HCT116 (cell line): ENCODE measurements at regions of chr10 and their contacts with region 1.

Region 1: GRCh38 chr10:115417585-115418265 is 324.6 kb downstream of the ATRNL1 start:
- DNase-seq: peak; percentile 66
- ATAC-seq: peak; percentile 100
- H3K4me3 ChIP-seq: no peak overlapping the region
- H3K27ac ChIP-seq: no peak overlapping the region
- H3K4me1 ChIP-seq: no peaks in the 10 kb centered on the region
- H3K27me3 ChIP-seq: peaks cover 16% of the 10 kb centered on the region; the same call in 1 of the 2 replicates
- CTCF ChIP-seq: peak; percentile 85 to 95 (median 93)
- POLR2A ChIP-seq: no peak
- RAD21 ChIP-seq: peak; percentile 92

Region 2: DNA sequence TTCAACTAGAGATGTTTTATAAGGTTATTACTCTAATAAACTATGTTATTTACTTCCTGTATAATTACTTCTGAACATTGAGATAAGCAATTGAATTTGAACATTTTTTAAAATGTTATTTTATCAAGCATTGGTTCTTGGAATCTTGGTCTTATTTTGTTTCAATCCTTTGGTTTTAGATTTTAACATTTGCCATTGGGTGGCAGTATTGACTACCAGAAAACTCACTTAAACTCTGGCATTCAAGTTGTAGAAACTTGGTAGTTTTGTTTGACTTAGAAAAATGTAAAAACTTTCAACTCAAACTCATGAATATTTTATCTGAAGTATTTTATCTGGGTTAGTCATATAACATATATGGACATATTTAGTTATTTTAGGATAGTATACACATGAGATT is 276.5 kb before region 1 on chr10:
- CTCF ChIA-PET with region 1: interaction called, 45 read pairs
- POLR2A ChIA-PET with region 1: no interaction called
- RAD21 ChIA-PET with region 1: no interaction called
- intact Hi-C with region 1: loop called (anchors 1 kb)
- DNase-seq: peak; percentile 15
- ATAC-seq: no peak
- H3K4me3 ChIP-seq: no peak overlapping the region
- H3K27ac ChIP-seq: no peak overlapping the region
- H3K4me1 ChIP-seq: no peaks in the 10 kb centered on the region
- H3K27me3 ChIP-seq: peaks cover 36% of the 10 kb centered on the region
- CTCF ChIP-seq: peak; percentile 50 to 70 (median 58); a peak in 4 of 6 replicates
- POLR2A ChIP-seq: no peak
- RAD21 ChIP-seq: peak; percentile 72

Region 3: GRCh38 chr10:115171392-115171960 is 246.2 kb before region 1 on chr10:
- CTCF ChIA-PET with region 1: interaction called, 6 read pairs
- POLR2A ChIA-PET with region 1: no interaction called
- RAD21 ChIA-PET with region 1: no interaction called
- intact Hi-C with region 1: loop called (anchors 1 kb)
- DNase-seq: peak; percentile 7
- ATAC-seq: peak; percentile 57
- H3K4me3 ChIP-seq: no peak overlapping the region
- H3K27ac ChIP-seq: no peak overlapping the region
- H3K4me1 ChIP-seq: no peaks in the 10 kb centered on the region
- H3K27me3 ChIP-seq: no peaks in the 10 kb centered on the region
- CTCF ChIP-seq: peak; percentile 2 to 68 (median 24); a peak in 3 of 6 replicates
- POLR2A ChIP-seq: no peak
- RAD21 ChIP-seq: peak; percentile 53